Activated T-helper 1 cell treated with anti-CD3 and anti-CD28 coated beads, Interleukin-12 subunit alpha, Interleukin-12 subunit beta, Interleukin-2, Interleukin-4 antibody, amounts not matched to agents 30 ng/mL and 10 ng/mL and 1 ng/mL, durations not matched to agents 14 hours and 24 hours and 36 hours (primary cell): ENCODE measurements at regions of chr12 and their contacts with region 1.

Region 1: GRCh38 chr12:24991209-24992049 is 42.5 kb upstream of the BCAT1 start:
- DNase-seq: no peak
- H3K4me3 Mint-ChIP-seq: no peak overlapping the region
- H3K27ac Mint-ChIP-seq: no peak overlapping the region
- H3K4me1 Mint-ChIP-seq: no peaks in the 10 kb centered on the region
- H3K27me3 Mint-ChIP-seq: no peaks in the 10 kb centered on the region

Region 2: GRCh38 chr12:24252602-24253001 is 738.8 kb before region 1 on chr12:
- intact Hi-C with region 1: no loop called
- DNase-seq: no peak
- H3K4me3 Mint-ChIP-seq: no peak overlapping the region
- H3K27ac Mint-ChIP-seq: no peak overlapping the region
- H3K4me1 Mint-ChIP-seq: no peaks in the 10 kb centered on the region
- H3K27me3 Mint-ChIP-seq: no peaks in the 10 kb centered on the region

Region 3: GRCh38 chr12:24852420-24852819 is 139.0 kb before region 1 on chr12:
- intact Hi-C with region 1: loop called (anchors 2 kb)
- DNase-seq: no peak
- H3K4me3 Mint-ChIP-seq: no peak overlapping the region
- H3K27ac Mint-ChIP-seq: no peak overlapping the region
- H3K4me1 Mint-ChIP-seq: peaks cover 14% of the 10 kb centered on the region
- H3K27me3 Mint-ChIP-seq: peaks cover 2% of the 10 kb centered on the region

Region 4: DNA sequence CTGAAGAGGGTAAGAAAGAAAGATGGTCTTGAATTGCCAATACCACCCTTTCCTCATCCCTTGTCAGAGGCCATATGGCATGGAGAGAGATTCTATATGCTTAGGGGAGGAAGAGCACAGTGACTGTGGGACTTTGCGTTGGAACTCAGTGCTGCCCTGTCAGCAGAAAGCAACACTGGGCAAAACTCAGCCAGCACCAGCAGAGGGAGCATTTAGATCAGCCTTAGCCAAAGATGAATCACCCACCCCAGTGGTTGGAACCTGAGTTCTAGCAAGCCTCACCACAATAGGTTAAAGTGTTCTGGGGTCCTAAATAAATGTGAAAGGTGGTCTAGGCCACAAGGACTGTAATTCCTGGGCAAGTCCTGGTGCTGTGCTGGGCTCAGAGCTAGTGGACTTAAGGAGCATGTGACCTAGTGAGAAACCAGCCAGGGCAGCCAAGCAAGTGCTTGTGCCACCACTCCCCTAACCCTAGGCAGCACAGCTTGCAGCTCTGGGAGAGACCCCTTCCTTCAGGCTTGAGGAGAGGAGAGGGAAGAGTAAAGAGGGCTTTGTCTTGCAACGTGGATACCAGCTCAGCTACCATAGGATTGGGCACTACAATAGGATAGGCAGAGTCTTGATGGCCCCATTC is 31.1 kb before region 1 on chr12:
- intact Hi-C with region 1: loop called (anchors 2 kb)
- DNase-seq: peak; percentile 19
- H3K4me3 Mint-ChIP-seq: no peak overlapping the region
- H3K27ac Mint-ChIP-seq: no peak overlapping the region
- H3K4me1 Mint-ChIP-seq: peaks cover 20% of the 10 kb centered on the region
- H3K27me3 Mint-ChIP-seq: no peaks in the 10 kb centered on the region

Region 5: GRCh38 chr12:25005376-25005775 is 13.9 kb after region 1 on chr12:
- intact Hi-C with region 1: no loop called
- DNase-seq: no peak
- H3K4me3 Mint-ChIP-seq: no peak overlapping the region
- H3K27ac Mint-ChIP-seq: no peak overlapping the region
- H3K4me1 Mint-ChIP-seq: no peaks in the 10 kb centered on the region
- H3K27me3 Mint-ChIP-seq: peaks cover 3% of the 10 kb centered on the region

Region 6: GRCh38 chr12:25130741-25131188 is 139.3 kb after region 1 on chr12:
- intact Hi-C with region 1: loop called (anchors 1 kb)
- DNase-seq: no peak
- H3K4me3 Mint-ChIP-seq: no peak overlapping the region
- H3K27ac Mint-ChIP-seq: no peak overlapping the region
- H3K4me1 Mint-ChIP-seq: no peaks in the 10 kb centered on the region
- H3K27me3 Mint-ChIP-seq: peaks cover 3% of the 10 kb centered on the region

Region 7: GRCh38 chr12:25151476-25151875 is 160.0 kb after region 1 on chr12:
- intact Hi-C with region 1: loop called (anchors 1 kb)
- DNase-seq: no peak
- H3K4me3 Mint-ChIP-seq: no peak overlapping the region
- H3K27ac Mint-ChIP-seq: no peak overlapping the region
- H3K4me1 Mint-ChIP-seq: peaks cover 7% of the 10 kb centered on the region
- H3K27me3 Mint-ChIP-seq: no peaks in the 10 kb centered on the region